ENCODE measurements at regions of chr6 and their contacts with region 1.

Region 1: DNA sequence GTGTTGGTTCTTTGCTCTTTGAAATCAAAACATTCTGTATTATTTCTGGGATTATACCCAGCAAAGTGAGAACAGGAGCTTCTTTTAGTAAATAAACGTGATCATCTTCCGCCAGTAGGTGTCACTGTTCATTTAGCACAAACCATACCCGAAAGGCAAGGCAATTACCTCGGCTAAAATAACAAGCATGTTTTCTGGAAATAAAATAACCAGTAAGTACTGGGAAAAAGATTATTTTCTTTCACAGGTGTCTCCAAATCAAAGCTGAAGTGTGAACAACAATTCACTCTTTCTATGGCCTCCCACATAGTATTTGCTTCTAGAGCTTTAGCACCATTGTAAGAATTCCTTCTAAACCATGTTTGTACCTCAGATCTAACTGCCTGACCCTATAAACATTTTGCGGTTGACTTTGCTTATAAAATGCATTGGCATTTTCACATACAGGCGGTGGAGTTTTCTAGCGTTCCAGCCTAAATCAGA is 144.6 kb upstream of the AGPAT4 start:
- DNase-seq: peak; percentile 61

Region 2: DNA sequence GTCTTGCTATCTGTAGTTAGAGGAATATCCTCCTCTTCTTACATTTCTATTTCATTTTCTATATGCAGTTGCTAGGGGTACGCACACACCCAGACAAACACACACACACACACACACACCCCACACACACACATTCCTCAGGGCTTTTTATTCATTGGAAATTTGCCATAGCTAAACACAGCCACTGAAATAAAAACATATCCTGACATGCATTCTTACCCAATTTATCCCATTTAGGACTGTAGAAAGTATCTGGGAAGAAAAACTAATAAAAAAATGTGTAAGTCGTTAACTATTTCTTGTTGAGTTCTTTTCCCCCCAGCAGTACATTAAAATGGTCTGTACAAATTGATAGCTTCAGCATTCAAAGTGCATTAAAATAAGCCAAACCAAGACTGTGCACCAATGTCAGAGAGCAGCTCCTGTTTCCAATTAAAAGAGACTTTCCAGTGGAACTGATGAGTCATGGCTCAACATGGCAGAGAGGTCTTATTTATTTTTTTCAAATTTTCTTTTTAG is 213.2 kb after region 1 on chr6:
- in situ Hi-C with region 1: loop called (anchors 25 kb)
- DNase-seq: no peak

Measured in KBM-7 (cell line).